Heart right ventricle (tissue), 16 donors: ENCODE measurements at regions of chr16 and their contacts with region 1.

Region 1: GRCh38 chr16:77443357-77444146 is 8.7 kb upstream of the ADAMTS18 start:
- DNase-seq: no peak
- ATAC-seq: no peak
- H3K4me3 ChIP-seq: no peak overlapping the region
- H3K27ac ChIP-seq: no peak overlapping the region
- H3K4me1 ChIP-seq: peaks cover 0 to 13% (median 0%) of the 10 kb centered on the region in 9 donors
- H3K27me3 ChIP-seq: peaks cover 0 to 12% (median 4%) of the 10 kb centered on the region in 7 donors
- CTCF ChIP-seq: no peak

Region 2: GRCh38 chr16:77014441-77014840 is 429.1 kb before region 1 on chr16:
- intact Hi-C with region 1: no loop called
- DNase-seq: no peak
- ATAC-seq: no peak
- H3K4me3 ChIP-seq: no peak overlapping the region
- H3K27ac ChIP-seq: no peak overlapping the region
- H3K4me1 ChIP-seq: no peaks in the 10 kb centered on the region
- H3K27me3 ChIP-seq: no peaks in the 10 kb centered on the region
- CTCF ChIP-seq: no peak

Region 3: DNA sequence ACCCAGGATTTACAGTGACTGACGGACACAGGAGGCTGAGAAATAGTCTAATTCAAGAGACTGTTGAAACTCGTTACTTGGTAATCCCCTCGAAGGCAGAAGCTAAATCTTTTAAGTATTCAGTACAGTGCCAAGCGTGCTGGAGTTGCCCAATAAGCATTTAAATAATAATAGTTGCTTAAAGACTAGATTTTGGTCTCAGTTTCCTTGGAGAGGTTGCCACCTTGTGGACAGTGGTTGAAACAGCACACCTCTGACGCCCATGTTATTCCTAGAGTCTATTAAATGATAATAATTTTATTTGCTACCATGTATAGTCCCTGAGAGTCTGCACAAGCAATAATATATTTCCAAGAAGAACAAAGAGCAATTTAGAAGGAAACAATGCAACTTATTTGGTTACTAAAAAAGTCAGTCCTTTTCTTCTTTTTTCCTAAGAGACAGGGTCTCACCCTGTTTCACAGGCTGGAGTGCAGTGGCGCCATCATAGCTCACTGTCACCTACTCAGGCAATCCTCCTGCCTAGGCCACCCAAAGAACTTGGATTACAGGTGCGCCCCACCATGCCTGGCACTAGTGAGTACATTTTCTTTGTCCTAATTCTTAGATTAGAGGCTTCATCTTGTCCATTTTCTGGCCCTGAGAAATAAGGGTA is 140.8 kb after region 1 on chr16:
- intact Hi-C with region 1: loop called in 5 of 10 experiments (anchors 2 to 10 kb)
- DNase-seq: peak in 1 of 2 donors; percentile 35
- ATAC-seq: peak in 6 of 8 donors; percentile 45 to 71 (median 52)
- H3K4me3 ChIP-seq: no peak overlapping the region
- H3K27ac ChIP-seq: peak overlapping the region in 2 of 10 donors; percentile 4 to 6
- H3K4me1 ChIP-seq: peaks cover 0 to 30% (median 3%) of the 10 kb centered on the region in 9 donors
- H3K27me3 ChIP-seq: peaks cover 0 to 33% (median 6%) of the 10 kb centered on the region in 7 donors
- CTCF ChIP-seq: peak; percentile 80 to 92 (median 89)